ENCODE measurements at regions of chr1 and their contacts with region 1.

Region 1: GRCh38 chr1:174217787-174218574 is 58.7 kb downstream of the RABGAP1L start:
- DNase-seq: no peak
- CTCF ChIP-seq: peak; percentile 61

Region 2: GRCh38 chr1:173429471-173430402 is 788.2 kb before region 1 on chr1:
- in situ Hi-C with region 1: loop called (anchors 25 kb)
- DNase-seq: peak; percentile 42
- CTCF ChIP-seq: peak; percentile 90

Region 3: GRCh38 chr1:174097426-174097825 is 120.6 kb before region 1 on chr1:
- in situ Hi-C with region 1: loop called (anchors 5 kb)
- DNase-seq: no peak
- CTCF ChIP-seq: no peak

Region 4: GRCh38 chr1:175702079-175702795 is 1484.3 kb after region 1 on chr1:
- in situ Hi-C with region 1: no loop called
- DNase-seq: no peak
- CTCF ChIP-seq: no peak

Measured in GM13976 (cell line).